ENCODE measurements at regions of chr10 and their contacts with region 1.

Region 1: GRCh38 chr10:88932539-88933256 is 19.9 kb downstream of the ACTA2 start:
- DNase-seq: peak; percentile 58
- H3K4me3 Mint-ChIP-seq: no peak overlapping the region
- H3K27ac Mint-ChIP-seq: no peak overlapping the region
- H3K4me1 Mint-ChIP-seq: peaks cover 18% of the 10 kb centered on the region
- H3K27me3 Mint-ChIP-seq: no peaks in the 10 kb centered on the region

Region 2: GRCh38 chr10:88721392-88721791 is 211.3 kb before region 1 on chr10:
- CTCF ChIA-PET with region 1: no interaction called
- intact Hi-C with region 1: no loop called
- DNase-seq: no peak
- H3K4me3 Mint-ChIP-seq: no peak overlapping the region
- H3K27ac Mint-ChIP-seq: no peak overlapping the region
- H3K4me1 Mint-ChIP-seq: peaks cover 2% of the 10 kb centered on the region
- H3K27me3 Mint-ChIP-seq: peaks cover 9% of the 10 kb centered on the region

Region 3: DNA sequence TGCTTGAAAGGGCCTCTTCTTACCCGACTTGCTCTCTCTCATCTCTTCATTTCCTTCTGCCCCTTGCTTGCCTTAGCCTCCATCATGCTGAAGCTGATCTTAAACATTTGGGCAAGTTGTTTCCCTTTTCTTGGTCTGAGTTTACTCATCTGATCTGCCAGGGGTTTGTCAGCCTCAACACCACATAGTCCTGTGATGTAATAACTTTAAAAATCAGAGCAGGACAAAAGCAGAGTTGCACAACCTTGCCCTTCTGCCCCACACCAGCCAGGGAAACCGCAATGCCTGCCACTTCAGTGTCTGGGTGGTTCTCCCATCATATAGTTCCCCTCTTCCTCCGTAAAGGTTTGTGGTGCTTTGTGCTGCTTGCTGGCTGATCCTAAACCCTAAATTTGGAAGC is 140.0 kb before region 1 on chr10:
- CTCF ChIA-PET with region 1: no interaction called
- intact Hi-C with region 1: no loop called
- DNase-seq: no peak
- H3K4me3 Mint-ChIP-seq: no peak overlapping the region
- H3K27ac Mint-ChIP-seq: no peak overlapping the region
- H3K4me1 Mint-ChIP-seq: peaks cover 19% of the 10 kb centered on the region
- H3K27me3 Mint-ChIP-seq: peaks cover 11% of the 10 kb centered on the region

Region 4: GRCh38 chr10:88828310-88828709 is 104.4 kb before region 1 on chr10:
- CTCF ChIA-PET with region 1: interaction called, 448 read pairs
- intact Hi-C with region 1: no loop called
- DNase-seq: no peak
- H3K4me3 Mint-ChIP-seq: no peak overlapping the region
- H3K27ac Mint-ChIP-seq: no peak overlapping the region
- H3K4me1 Mint-ChIP-seq: peaks cover 47% of the 10 kb centered on the region
- H3K27me3 Mint-ChIP-seq: no peaks in the 10 kb centered on the region

Region 5: DNA sequence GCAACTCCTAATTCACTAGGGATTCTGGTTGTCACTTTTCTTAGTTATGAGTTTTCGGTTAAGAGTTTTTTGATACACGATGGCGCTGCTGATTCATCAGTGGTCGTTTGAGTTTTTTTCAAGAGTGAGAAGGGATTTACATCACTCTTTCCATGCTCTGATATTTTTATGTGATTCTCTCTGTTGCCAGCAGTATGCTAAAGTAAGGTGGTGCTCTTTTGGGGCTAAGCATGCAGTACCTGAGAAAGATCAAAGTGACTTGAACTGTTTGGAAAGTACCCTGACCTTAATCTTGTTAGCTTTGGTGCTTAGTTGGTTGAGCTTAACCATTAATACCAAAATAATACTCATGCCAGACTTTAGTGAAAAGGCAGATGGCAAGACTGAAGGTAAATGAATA is 24.5 kb before region 1 on chr10:
- CTCF ChIA-PET with region 1: interaction called, 16 read pairs
- intact Hi-C with region 1: loop called (anchors 1 kb)
- DNase-seq: peak; percentile 44
- H3K4me3 Mint-ChIP-seq: no peak overlapping the region
- H3K27ac Mint-ChIP-seq: peak overlapping the region; percentile 25
- H3K4me1 Mint-ChIP-seq: peaks cover 20% of the 10 kb centered on the region
- H3K27me3 Mint-ChIP-seq: no peaks in the 10 kb centered on the region

Region 6: GRCh38 chr10:88990384-88991160 is 57.9 kb after region 1 on chr10 and contains the start of gene FAS:
- CTCF ChIA-PET with region 1: interaction called, 28 read pairs
- intact Hi-C with region 1: loop called (anchors 1 kb)
- DNase-seq: peak; percentile 96
- H3K4me3 Mint-ChIP-seq: peak within 1 kb of the TSS; percentile 92
- H3K27ac Mint-ChIP-seq: peak within 1 kb of the TSS; percentile 98
- H3K4me1 Mint-ChIP-seq: peaks cover 46% of the 10 kb centered on the region
- H3K27me3 Mint-ChIP-seq: no peaks in the 10 kb centered on the region
- total RNA-seq, gene FAS: 69.3 to 72.9 TPM

Region 7: DNA sequence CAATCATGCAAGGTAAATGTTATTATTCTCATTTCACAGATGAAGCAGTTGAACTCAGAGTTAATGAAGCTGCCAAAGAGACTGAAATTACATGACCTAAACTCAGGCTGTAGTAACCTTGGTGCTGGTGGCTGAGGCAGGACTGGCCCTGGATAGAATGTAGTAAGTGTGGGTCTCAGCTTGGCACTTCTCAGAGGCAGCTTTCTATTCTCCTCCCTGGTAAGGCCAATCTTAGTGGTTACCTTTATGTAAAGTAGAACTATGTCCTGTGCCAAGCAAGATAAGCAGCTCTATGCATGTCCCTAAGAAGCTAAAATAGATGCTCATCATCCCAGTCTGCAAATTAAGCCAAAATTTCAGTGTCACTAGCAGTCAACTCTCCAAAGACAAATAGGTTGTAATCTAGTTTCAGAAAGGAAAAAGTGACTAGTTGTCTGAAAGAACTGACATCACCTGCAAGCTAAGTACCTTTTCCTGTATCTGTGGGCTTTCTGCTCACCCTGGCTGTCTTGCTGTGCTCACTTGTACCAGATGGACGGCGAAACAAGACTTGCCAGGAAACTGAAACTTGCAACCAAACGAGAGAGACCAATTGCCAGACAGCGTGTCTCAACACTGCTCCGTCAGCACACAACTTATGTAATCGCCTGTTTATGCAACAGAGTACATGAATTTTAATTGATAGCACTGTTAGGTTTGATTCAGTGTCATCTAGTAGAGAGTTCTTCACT is 230.7 kb after region 1 on chr10:
- CTCF ChIA-PET with region 1: interaction called, 4 read pairs
- intact Hi-C with region 1: loop called (anchors 1 kb)
- DNase-seq: peak; percentile 69
- H3K4me3 Mint-ChIP-seq: peak overlapping the region; percentile 33
- H3K27ac Mint-ChIP-seq: peak overlapping the region; percentile 5
- H3K4me1 Mint-ChIP-seq: peaks cover 36% of the 10 kb centered on the region
- H3K27me3 Mint-ChIP-seq: peaks cover 7% of the 10 kb centered on the region